ENCODE measurements at regions of chr1 and their contacts with region 1.

Region 1: GRCh38 chr1:192580351-192580962 is 4.9 kb downstream of the RGS1 start:
- DNase-seq: peak in 4 of 5 donors; percentile 29 to 51 (median 42)
- H3K4me3 ChIP-seq: no peak overlapping the region
- H3K4me3 Mint-ChIP-seq: no peak overlapping the region
- H3K27ac ChIP-seq: no peak overlapping the region
- H3K27ac Mint-ChIP-seq: peak overlapping the region in 2 of 7 donors; percentile 8 to 23
- H3K4me1 ChIP-seq: peaks cover 46% of the 10 kb centered on the region
- H3K4me1 Mint-ChIP-seq: peaks cover 28 to 45% (median 35%) of the 10 kb centered on the region in 4 donors
- H3K27me3 ChIP-seq: no peaks in the 10 kb centered on the region
- H3K27me3 Mint-ChIP-seq: peaks cover 0 to 2% of the 10 kb centered on the region in 2 donors

Region 2: DNA sequence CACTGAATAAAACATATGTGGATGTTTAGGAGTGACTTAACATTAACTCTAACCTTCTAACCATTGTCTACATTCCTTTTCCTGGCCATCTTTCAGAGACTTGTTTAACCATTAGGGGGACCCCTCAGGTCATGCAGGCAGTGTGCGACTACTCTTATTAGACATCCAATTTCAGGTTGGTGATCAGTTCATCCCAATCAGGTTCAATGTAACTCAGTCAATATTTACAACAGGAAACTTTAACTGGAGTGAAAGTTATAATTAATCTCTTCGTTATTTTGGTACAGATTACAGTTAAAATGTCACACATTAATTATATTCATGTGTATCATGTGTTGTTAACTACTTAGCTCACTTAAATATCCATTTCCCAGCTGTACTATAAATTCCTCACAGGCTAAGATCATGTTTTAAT is 73.7 kb before region 1 on chr1:
- CTCF ChIA-PET with region 1: interaction called, 24 read pairs
- POLR2A ChIA-PET with region 1: interaction called, 3 read pairs
- intact Hi-C with region 1: loop called (anchors 1 kb)
- DNase-seq: no peak
- H3K4me3 ChIP-seq: no peak overlapping the region
- H3K4me3 Mint-ChIP-seq: no peak overlapping the region
- H3K27ac ChIP-seq: no peak overlapping the region
- H3K27ac Mint-ChIP-seq: no peak overlapping the region
- H3K4me1 ChIP-seq: no peaks in the 10 kb centered on the region
- H3K4me1 Mint-ChIP-seq: no peaks in the 10 kb centered on the region
- H3K27me3 ChIP-seq: no peaks in the 10 kb centered on the region
- H3K27me3 Mint-ChIP-seq: no peaks in the 10 kb centered on the region

Region 3: GRCh38 chr1:192516776-192517297 is 63.6 kb before region 1 on chr1:
- CTCF ChIA-PET with region 1: interaction called, 30 read pairs
- POLR2A ChIA-PET with region 1: interaction called, 12 read pairs
- intact Hi-C with region 1: loop called (anchors 1 kb)
- DNase-seq: peak; percentile 83 to 90 (median 86)
- H3K4me3 ChIP-seq: no peak overlapping the region
- H3K4me3 Mint-ChIP-seq: peak overlapping the region; percentile 56 to 83 (median 76)
- H3K27ac ChIP-seq: peak overlapping the region; percentile 35
- H3K27ac Mint-ChIP-seq: peak overlapping the region; percentile 81 to 98 (median 94)
- H3K4me1 ChIP-seq: peaks cover 28% of the 10 kb centered on the region
- H3K4me1 Mint-ChIP-seq: peaks cover 28 to 47% (median 38%) of the 10 kb centered on the region in 4 donors
- H3K27me3 ChIP-seq: no peaks in the 10 kb centered on the region
- H3K27me3 Mint-ChIP-seq: no peaks in the 10 kb centered on the region

Region 4: GRCh38 chr1:192539297-192540092 is 41.0 kb before region 1 on chr1:
- CTCF ChIA-PET with region 1: interaction called, 5 read pairs
- POLR2A ChIA-PET with region 1: interaction called, 5 read pairs
- intact Hi-C with region 1: loop called (anchors 2 kb)
- DNase-seq: no peak
- H3K4me3 ChIP-seq: no peak overlapping the region
- H3K4me3 Mint-ChIP-seq: peak overlapping the region; percentile 13 to 83 (median 54)
- H3K27ac ChIP-seq: peak overlapping the region; percentile 15
- H3K27ac Mint-ChIP-seq: peak overlapping the region; percentile 73 to 97 (median 94)
- H3K4me1 ChIP-seq: peaks cover 46% of the 10 kb centered on the region
- H3K4me1 Mint-ChIP-seq: peaks cover 28 to 52% (median 41%) of the 10 kb centered on the region in 4 donors
- H3K27me3 ChIP-seq: no peaks in the 10 kb centered on the region
- H3K27me3 Mint-ChIP-seq: no peaks in the 10 kb centered on the region

Region 5: DNA sequence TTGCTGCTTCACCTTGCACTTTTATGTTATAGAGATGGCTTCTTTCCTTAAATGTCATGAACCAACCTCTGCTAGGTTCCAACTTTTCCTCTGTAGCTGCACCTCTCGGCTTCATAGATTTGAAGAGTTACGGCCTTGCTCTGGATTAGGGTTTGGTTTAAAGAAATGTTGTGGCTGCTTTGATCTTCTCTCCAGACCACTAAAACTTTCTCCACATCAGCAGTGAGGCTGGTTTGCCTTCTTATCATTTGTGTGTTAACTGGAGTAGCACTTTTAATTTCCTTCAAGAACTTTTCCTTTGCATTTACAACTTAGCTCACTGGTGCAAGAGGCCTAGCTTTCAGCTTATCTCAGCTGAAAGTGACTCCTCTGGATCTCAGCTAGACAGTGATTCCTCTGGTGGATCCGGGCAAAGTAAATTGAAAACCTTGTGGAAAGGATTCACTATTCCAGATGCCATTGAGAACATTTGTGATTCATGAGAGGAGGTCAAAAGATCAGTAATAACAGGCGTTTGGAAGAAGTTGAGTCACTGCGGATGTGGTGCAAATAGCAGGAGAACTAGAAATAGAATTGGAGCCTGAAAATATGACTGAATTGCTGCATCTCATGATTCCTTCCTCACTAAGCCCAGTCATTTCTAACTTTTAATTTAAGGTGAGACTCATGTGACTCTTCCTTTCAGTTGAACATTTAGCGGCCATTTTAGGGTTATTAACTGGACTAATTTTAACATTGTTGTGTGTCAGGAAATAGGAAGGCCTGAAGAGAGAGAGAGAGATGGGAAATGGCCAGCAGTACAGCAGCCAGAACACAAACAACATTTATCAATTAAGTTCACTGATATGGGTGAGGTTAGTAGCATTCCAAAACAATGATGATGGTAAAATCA is 21.1 kb before region 1 on chr1:
- CTCF ChIA-PET with region 1: no interaction called
- POLR2A ChIA-PET with region 1: no interaction called
- intact Hi-C with region 1: loop called (anchors 2 kb)
- DNase-seq: no peak
- H3K4me3 ChIP-seq: no peak overlapping the region
- H3K4me3 Mint-ChIP-seq: peak overlapping the region in 4 of 8 donors; percentile 32 to 66 (median 44)
- H3K27ac ChIP-seq: no peak overlapping the region
- H3K27ac Mint-ChIP-seq: peak overlapping the region; percentile 57 to 82 (median 76)
- H3K4me1 ChIP-seq: peaks cover 18% of the 10 kb centered on the region
- H3K4me1 Mint-ChIP-seq: peaks cover 9 to 25% (median 18%) of the 10 kb centered on the region in 4 donors
- H3K27me3 ChIP-seq: no peaks in the 10 kb centered on the region
- H3K27me3 Mint-ChIP-seq: no peaks in the 10 kb centered on the region

Region 6: DNA sequence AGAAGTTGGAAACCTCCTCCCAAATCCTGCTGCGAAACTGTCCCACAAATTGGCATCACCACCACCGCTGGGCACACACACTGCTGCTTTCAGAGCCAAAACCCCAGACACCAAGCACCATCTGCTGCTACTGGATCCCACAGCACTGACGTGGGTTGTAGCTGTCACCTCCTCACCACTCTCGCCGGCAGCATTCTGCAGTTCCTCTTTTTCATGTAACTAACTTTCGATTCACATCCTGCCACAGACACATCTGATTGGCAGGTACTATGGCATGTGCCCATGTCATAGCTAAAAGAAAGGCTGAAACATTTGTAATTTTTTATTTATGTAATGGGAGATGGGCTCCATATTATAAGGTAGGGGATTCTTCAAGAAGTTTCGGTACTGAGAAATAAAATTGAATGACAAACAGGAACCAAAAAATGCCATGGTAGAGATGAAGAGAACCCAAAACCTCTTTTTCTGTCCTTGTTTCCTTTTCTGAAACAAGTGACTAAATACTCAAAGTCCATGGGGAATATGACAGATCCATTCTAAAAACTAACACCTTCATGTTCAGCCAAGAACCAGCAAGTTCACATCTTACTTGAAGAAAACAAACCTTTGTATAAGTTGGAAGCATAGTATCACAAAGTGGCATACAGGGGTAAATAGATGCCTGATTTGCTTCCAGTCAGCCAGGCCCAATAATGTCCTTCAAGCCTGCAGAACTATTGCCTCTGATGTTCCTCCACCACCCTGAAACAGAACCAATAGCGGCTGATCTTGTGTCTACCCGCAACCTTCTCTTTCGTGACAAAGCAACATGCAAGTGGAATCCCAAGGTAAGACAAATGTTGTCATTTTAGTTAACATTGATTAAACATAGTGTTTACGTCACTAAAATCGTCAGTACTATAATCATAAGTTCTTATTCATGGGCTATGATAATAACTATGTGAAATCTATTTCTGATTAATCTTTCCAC is 28.9 kb after region 1 on chr1:
- CTCF ChIA-PET with region 1: interaction called, 17 read pairs
- POLR2A ChIA-PET with region 1: interaction called, 3 read pairs
- intact Hi-C with region 1: loop called (anchors 1 kb)
- DNase-seq: peak; percentile 55 to 79 (median 71)
- H3K4me3 ChIP-seq: no peak overlapping the region
- H3K4me3 Mint-ChIP-seq: peak overlapping the region; percentile 33 to 76 (median 66)
- H3K27ac ChIP-seq: peak overlapping the region; percentile 0
- H3K27ac Mint-ChIP-seq: peak overlapping the region; percentile 6 to 90 (median 85)
- H3K4me1 ChIP-seq: peaks cover 15% of the 10 kb centered on the region
- H3K4me1 Mint-ChIP-seq: peaks cover 12 to 18% (median 15%) of the 10 kb centered on the region in 4 donors
- H3K27me3 ChIP-seq: no peaks in the 10 kb centered on the region
- H3K27me3 Mint-ChIP-seq: no peaks in the 10 kb centered on the region

Region 7: GRCh38 chr1:192639607-192640368 is 59.3 kb after region 1 on chr1:
- CTCF ChIA-PET with region 1: no interaction called
- POLR2A ChIA-PET with region 1: no interaction called
- intact Hi-C with region 1: no loop called
- DNase-seq: no peak
- H3K4me3 ChIP-seq: no peak overlapping the region
- H3K4me3 Mint-ChIP-seq: no peak overlapping the region
- H3K27ac ChIP-seq: no peak overlapping the region
- H3K27ac Mint-ChIP-seq: no peak overlapping the region
- H3K4me1 ChIP-seq: no peaks in the 10 kb centered on the region
- H3K4me1 Mint-ChIP-seq: peaks cover 0 to 2% (median 0%) of the 10 kb centered on the region in 4 donors
- H3K27me3 ChIP-seq: no peaks in the 10 kb centered on the region
- H3K27me3 Mint-ChIP-seq: no peaks in the 10 kb centered on the region

Region 8: GRCh38 chr1:192668434-192668983 is 88.1 kb after region 1 on chr1:
- CTCF ChIA-PET with region 1: no interaction called
- POLR2A ChIA-PET with region 1: no interaction called
- intact Hi-C with region 1: no loop called
- DNase-seq: no peak
- H3K4me3 ChIP-seq: no peak overlapping the region
- H3K4me3 Mint-ChIP-seq: no peak overlapping the region
- H3K27ac ChIP-seq: no peak overlapping the region
- H3K27ac Mint-ChIP-seq: no peak overlapping the region
- H3K4me1 ChIP-seq: no peaks in the 10 kb centered on the region
- H3K4me1 Mint-ChIP-seq: no peaks in the 10 kb centered on the region
- H3K27me3 ChIP-seq: no peaks in the 10 kb centered on the region
- H3K27me3 Mint-ChIP-seq: peaks cover 2 to 7% of the 10 kb centered on the region in 2 donors

Measured in CD4-positive, alpha-beta memory T cell (primary cell).